SK-N-SH (cell line): ENCODE measurements at regions of chr11 and their contacts with region 1.

Region 1: DNA sequence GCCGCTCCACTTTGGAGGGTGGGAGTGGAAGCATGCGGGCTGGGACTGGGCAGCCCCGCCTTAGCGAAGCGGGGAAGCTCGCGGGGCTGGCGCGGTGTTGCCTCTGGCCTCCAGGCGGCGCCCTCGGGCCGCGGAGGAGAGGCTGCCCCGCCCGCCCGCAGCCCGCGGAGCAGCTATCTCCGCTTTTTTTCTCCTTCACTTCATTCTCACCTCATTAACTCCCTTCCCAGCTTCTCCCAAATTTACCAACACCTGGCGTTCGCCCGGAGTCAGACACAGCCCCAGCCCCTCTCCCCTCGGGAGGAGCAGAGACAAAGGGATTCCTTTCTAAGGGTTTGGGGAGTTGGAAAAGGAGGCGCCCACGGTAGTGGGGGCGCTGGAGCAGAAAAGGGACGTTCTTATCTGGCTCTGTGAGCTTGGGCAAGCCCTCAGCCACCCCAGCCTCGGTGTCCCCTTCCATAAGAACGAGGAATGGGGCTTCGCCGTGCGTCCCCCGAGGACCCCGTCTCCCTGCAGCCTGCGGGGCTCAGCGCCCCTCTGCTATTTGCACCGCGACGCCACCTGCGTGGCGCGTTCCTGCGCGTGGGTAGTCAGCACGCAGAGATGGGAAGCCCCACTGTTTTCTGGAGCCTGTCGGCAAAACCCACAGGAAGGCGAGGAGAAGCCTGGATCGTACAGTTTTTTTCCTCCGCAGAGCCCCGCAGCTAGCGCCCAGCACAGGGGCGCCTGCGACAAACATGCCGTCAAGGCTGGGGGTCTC is 1.5 kb upstream of the WNT11 start:
- DNase-seq: peak; percentile 94
- H3K4me3 ChIP-seq: peak overlapping the region; percentile 57 to 68
- H3K27ac ChIP-seq: no peak overlapping the region
- H3K4me1 ChIP-seq: peaks cover 0 to 37% of the 10 kb centered on the region in 2 experiments; a peak in 1 of 4 replicates
- H3K27me3 ChIP-seq: peaks cover 10% of the 10 kb centered on the region
- CTCF ChIP-seq: peak; percentile 88
- EP300 ChIP-seq: no peak
- RAD21 ChIP-seq: peak; percentile 76

Region 2: GRCh38 chr11:75916882-75917281 is 290.9 kb before region 1 on chr11:
- CTCF ChIA-PET with region 1: interaction called, 13 read pairs
- POLR2A ChIA-PET with region 1: no interaction called
- DNase-seq: no peak
- H3K4me3 ChIP-seq: no peak overlapping the region
- H3K27ac ChIP-seq: no peak overlapping the region
- H3K4me1 ChIP-seq: peaks cover 2 to 4% of the 10 kb centered on the region in 2 experiments; a peak in 3 of 4 replicates
- H3K27me3 ChIP-seq: no peaks in the 10 kb centered on the region
- CTCF ChIP-seq: no peak
- EP300 ChIP-seq: no peak
- RAD21 ChIP-seq: no peak

Region 3: DNA sequence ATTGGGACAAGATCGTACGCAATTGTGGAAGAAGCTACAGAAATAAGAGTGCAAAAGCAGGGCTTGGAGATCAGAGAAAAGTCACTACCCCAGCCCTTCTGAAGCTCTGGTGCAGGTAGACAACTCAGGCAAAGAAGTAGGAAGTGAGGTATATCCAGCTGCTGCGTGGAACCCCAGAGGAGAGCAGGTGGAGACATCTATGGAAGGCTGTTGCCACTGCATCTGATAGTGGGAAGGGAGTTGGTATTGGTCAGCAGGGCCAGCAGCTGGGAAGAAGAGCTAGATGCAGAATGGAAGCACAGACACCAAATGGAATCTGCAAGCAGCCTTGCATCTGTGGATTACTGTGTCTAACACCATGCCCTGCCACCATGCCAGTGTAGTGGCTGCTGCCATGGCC is 166.6 kb before region 1 on chr11:
- CTCF ChIA-PET with region 1: no interaction called
- POLR2A ChIA-PET with region 1: no interaction called
- DNase-seq: no peak
- H3K4me3 ChIP-seq: no peak overlapping the region
- H3K27ac ChIP-seq: no peak overlapping the region
- H3K4me1 ChIP-seq: no peaks in the 10 kb centered on the region; a peak in 1 of 4 replicates
- H3K27me3 ChIP-seq: no peaks in the 10 kb centered on the region
- CTCF ChIP-seq: no peak
- EP300 ChIP-seq: no peak
- RAD21 ChIP-seq: no peak

Region 4: DNA sequence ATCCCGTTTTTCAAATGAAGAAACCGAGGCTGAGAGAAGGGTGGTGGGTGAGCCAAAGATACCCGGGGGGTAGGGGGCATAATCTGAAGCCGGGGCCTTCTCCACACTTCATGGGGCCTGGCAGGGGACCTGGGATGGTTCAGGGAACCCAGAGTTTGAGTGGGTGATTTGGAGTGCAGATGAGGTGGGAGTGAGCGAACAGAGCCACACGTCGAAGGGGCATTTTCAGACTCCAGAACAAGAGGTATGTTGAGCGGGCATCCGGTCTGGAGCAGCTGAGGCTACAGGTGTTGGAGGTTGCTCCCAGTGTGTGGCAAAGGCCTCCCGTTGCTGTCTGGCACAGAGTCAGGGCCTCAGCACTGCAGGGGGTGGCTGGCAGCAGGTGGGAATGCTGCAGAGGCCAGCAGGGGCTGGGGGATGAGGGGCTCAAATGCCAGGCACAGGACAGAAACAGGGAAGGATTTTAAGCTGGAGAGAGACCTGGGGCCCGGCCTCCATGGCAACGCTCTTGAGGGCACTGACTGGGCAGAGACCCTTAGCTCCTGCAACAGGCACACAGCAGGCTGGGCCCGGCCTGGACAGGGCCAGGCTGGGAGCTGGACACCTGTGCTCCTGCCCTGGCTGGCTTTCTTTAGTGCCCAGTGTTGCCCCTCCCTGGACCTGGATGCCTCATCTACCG is 47.7 kb before region 1 on chr11:
- CTCF ChIA-PET with region 1: interaction called, 25 read pairs
- POLR2A ChIA-PET with region 1: no interaction called
- DNase-seq: peak; percentile 39
- H3K4me3 ChIP-seq: no peak overlapping the region
- H3K27ac ChIP-seq: no peak overlapping the region
- H3K4me1 ChIP-seq: peaks cover 0 to 60% of the 10 kb centered on the region in 2 experiments; a peak in 2 of 4 replicates
- H3K27me3 ChIP-seq: no peaks in the 10 kb centered on the region
- CTCF ChIP-seq: no peak
- EP300 ChIP-seq: no peak
- RAD21 ChIP-seq: no peak

Region 5: GRCh38 chr11:76235233-76236091 is 27.6 kb after region 1 on chr11:
- CTCF ChIA-PET with region 1: interaction called, 91 read pairs
- POLR2A ChIA-PET with region 1: no interaction called
- DNase-seq: peak; percentile 96
- H3K4me3 ChIP-seq: peak overlapping the region; percentile 94 to 99
- H3K27ac ChIP-seq: peak overlapping the region; percentile 75 to 90
- H3K4me1 ChIP-seq: peaks cover 0 to 22% of the 10 kb centered on the region in 2 experiments; a peak in 2 of 4 replicates
- H3K27me3 ChIP-seq: no peaks in the 10 kb centered on the region
- CTCF ChIP-seq: no peak
- EP300 ChIP-seq: peak in 1 of 2 experiments; percentile 23; a peak in 1 of 4 replicates
- RAD21 ChIP-seq: no peak

Region 6: GRCh38 chr11:76293189-76293631 is 85.4 kb after region 1 on chr11:
- CTCF ChIA-PET with region 1: interaction called, 14 read pairs
- POLR2A ChIA-PET with region 1: no interaction called
- DNase-seq: no peak
- H3K4me3 ChIP-seq: no peak overlapping the region
- H3K27ac ChIP-seq: no peak overlapping the region
- H3K4me1 ChIP-seq: no peaks in the 10 kb centered on the region; a peak in 1 of 4 replicates
- H3K27me3 ChIP-seq: no peaks in the 10 kb centered on the region
- CTCF ChIP-seq: no peak
- EP300 ChIP-seq: no peak
- RAD21 ChIP-seq: no peak

Region 7: GRCh38 chr11:76512851-76513653 is 305.2 kb after region 1 on chr11:
- CTCF ChIA-PET with region 1: interaction called, 10 read pairs
- POLR2A ChIA-PET with region 1: no interaction called
- DNase-seq: peak; percentile 13
- H3K4me3 ChIP-seq: no peak overlapping the region
- H3K27ac ChIP-seq: no peak overlapping the region
- H3K4me1 ChIP-seq: peaks cover 0 to 21% of the 10 kb centered on the region in 2 experiments; a peak in 1 of 4 replicates
- H3K27me3 ChIP-seq: no peaks in the 10 kb centered on the region
- CTCF ChIP-seq: peak; percentile 74
- EP300 ChIP-seq: no peak
- RAD21 ChIP-seq: peak; percentile 66